ENCODE measurements at regions of chr19 and their contacts with region 1.

Region 1: DNA sequence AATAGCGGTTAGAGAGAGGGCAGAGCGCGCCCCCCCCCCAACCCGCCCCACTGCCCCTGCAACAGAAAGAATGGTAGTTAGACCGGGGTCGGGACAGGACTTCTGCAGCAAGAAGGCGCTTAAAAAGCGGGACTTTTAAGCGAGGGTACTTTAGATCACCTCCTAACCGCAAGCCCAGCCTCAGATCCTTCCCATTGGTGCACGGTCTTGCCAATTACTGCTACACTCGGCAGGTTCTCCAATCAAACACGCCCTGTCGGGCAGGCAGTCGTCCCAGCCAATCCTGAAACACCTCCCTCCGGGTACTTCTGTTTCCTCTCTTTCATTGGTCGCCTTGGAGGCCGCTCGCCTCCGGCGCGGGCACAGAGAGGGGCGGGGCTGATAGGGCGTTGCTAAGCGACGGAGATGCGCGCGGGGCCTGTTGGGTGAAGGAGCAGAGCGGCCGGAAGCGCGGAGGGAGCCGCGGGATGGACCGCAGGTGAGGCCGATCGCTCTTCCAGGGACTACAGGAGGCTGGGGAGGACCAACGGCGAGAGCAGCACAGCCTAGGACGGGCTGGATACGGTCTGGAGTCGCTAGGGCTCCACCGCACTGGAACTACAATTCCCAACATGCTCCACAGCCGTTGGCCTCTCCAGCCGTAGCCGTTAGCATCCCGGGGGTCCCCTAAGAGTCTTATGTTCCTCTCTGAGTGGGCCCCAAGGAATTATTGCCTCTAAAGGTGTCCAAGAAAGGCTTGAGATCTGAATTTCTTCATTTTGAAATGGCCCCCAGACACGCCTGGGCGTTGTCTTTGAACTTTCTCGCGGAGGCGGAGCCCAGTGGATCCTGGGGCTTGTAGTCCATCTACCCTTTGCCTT is at the start of gene PROSER3:
- DNase-seq: peak; percentile 98 to 99
- H3K4me3 ChIP-seq: peak within 1 kb of the TSS; percentile 53 to 85
- H3K27ac ChIP-seq: peak within 1 kb of the TSS; percentile 99
- H3K4me1 ChIP-seq: peaks cover 7 to 24% of the 10 kb centered on the region in 2 donors
- H3K27me3 ChIP-seq: no peaks in the 10 kb centered on the region
- CTCF ChIP-seq: no peak
- total RNA-seq, gene PROSER3: 6.5 TPM

Region 2: GRCh38 chr19:35628565-35629331 is 129.2 kb before region 1 on chr19 and contains the start of gene RBM42:
- intact Hi-C with region 1: loop called (anchors 5 kb)
- DNase-seq: peak; percentile 95 to 99
- H3K4me3 ChIP-seq: peak within 1 kb of the TSS; percentile 74 to 97
- H3K27ac ChIP-seq: peak within 1 kb of the TSS; percentile 73 to 91
- H3K4me1 ChIP-seq: peaks cover 5 to 10% of the 10 kb centered on the region in 2 donors
- H3K27me3 ChIP-seq: no peaks in the 10 kb centered on the region
- CTCF ChIP-seq: no peak
- total RNA-seq, gene RBM42: 69.0 TPM

Region 3: GRCh38 chr19:35702223-35703012 is 55.6 kb before region 1 on chr19:
- intact Hi-C with region 1: loop called (anchors 1 kb)
- DNase-seq: peak; percentile 94 to 98
- H3K4me3 ChIP-seq: peak overlapping the region; percentile 64 to 65
- H3K27ac ChIP-seq: no peak overlapping the region
- H3K4me1 ChIP-seq: peaks cover 2 to 3% of the 10 kb centered on the region in 2 donors
- H3K27me3 ChIP-seq: no peaks in the 10 kb centered on the region
- CTCF ChIP-seq: no peak

Region 4: DNA sequence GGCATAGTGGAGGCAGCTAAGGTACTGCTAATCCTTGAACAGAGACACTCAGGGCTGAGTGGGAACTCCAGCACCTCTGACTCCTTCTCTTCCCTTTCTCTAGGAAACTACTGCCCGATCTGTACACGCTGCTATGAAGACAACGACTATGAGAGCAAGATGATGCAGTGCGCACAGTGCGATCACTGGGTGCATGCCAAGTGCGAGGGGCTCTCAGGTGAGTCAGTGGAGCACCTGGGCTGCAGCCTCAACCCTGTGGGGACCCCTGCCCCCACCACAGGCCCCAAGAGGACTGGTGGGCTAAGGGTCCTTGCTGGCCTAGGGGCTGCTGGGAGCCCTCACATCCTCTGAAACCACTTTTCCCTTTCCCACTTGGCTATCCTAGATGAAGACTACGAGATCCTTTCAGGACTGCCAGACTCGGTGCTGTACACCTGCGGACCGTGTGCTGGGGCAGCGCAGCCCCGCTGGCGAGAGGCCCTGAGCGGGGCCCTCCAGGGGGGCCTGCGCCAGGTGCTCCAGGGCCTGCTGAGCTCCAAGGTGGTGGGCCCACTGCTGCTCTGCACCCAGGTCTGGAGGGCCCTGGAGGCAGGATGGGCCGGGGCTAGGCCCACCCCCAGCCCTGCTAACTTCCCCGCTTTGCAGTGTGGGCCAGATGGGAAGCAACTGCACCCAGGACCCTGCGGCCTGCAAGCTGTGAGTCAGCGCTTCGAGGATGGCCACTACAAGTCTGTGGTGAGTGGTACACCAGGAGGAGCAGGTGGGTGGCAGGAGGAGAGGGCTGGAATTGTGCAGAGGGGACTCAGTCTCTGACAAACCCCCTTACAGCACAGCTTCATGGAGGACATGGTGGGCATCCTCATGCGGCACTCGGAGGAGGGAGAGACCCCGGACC is 30.7 kb before region 1 on chr19:
- intact Hi-C with region 1: no loop called
- DNase-seq: no peak
- H3K4me3 ChIP-seq: no peak overlapping the region
- H3K27ac ChIP-seq: no peak overlapping the region
- H3K4me1 ChIP-seq: no peaks in the 10 kb centered on the region
- H3K27me3 ChIP-seq: no peaks in the 10 kb centered on the region
- CTCF ChIP-seq: no peak

Region 5: GRCh38 chr19:35740423-35741202 is 17.4 kb before region 1 on chr19:
- intact Hi-C with region 1: loop called (anchors 2 kb)
- DNase-seq: peak; percentile 94 to 99
- H3K4me3 ChIP-seq: peak overlapping the region; percentile 56 to 70
- H3K27ac ChIP-seq: peak overlapping the region; percentile 81 to 85
- H3K4me1 ChIP-seq: peaks cover 10 to 18% of the 10 kb centered on the region in 2 donors
- H3K27me3 ChIP-seq: no peaks in the 10 kb centered on the region
- CTCF ChIP-seq: peak; percentile 12 to 22 (median 18)

Region 6: GRCh38 chr19:35775298-35776110 is 17.5 kb after region 1 on chr19 and contains the start of gene ARHGAP33:
- intact Hi-C with region 1: loop called (anchors 1 kb)
- DNase-seq: peak; percentile 96 to 99
- H3K4me3 ChIP-seq: peak within 1 kb of the TSS; percentile 84 to 88
- H3K27ac ChIP-seq: peak within 1 kb of the TSS; percentile 59 to 61
- H3K4me1 ChIP-seq: peaks cover 5 to 14% of the 10 kb centered on the region in 2 donors
- H3K27me3 ChIP-seq: no peaks in the 10 kb centered on the region
- CTCF ChIP-seq: no peak
- total RNA-seq, gene ARHGAP33: 8.7 TPM

Region 7: DNA sequence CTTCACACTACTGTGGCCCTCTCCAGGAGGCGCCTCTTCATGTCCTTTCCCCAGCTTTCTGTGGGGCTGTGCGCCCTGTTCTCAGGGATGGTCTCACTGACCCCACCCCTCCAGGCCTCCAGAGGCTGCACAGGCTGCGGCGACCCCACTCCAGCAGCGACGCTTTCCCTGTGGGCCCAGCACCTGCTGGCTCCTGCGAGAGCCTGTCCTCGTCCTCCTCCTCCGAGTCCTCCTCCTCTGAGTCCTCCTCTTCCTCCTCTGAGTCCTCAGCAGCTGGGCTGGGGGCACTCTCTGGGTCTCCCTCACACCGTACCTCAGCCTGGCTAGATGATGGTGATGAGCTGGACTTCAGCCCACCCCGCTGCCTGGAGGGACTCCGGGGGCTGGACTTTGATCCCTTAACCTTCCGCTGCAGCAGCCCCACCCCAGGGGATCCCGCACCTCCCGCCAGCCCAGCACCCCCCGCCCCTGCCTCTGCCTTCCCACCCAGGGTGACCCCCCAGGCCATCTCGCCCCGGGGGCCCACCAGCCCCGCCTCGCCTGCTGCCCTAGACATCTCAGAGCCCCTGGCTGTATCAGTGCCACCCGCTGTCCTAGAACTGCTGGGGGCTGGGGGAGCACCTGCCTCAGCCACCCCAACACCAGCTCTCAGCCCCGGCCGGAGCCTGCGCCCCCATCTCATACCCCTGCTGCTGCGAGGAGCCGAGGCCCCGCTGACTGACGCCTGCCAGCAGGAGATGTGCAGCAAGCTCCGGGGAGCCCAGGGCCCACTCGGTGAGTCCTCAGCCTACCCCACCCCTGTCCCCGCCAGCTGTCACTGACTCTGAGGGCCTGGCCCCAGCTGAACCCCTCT is 28.5 kb after region 1 on chr19:
- intact Hi-C with region 1: no loop called
- DNase-seq: no peak
- H3K4me3 ChIP-seq: no peak overlapping the region
- H3K27ac ChIP-seq: no peak overlapping the region
- H3K4me1 ChIP-seq: no peaks in the 10 kb centered on the region
- H3K27me3 ChIP-seq: no peaks in the 10 kb centered on the region
- CTCF ChIP-seq: no peak

Region 8: GRCh38 chr19:35869327-35870123 is 111.5 kb after region 1 on chr19:
- intact Hi-C with region 1: loop called (anchors 5 kb)
- DNase-seq: peak; percentile 17 to 79
- H3K4me3 ChIP-seq: peak overlapping the region; percentile 60 to 71
- H3K27ac ChIP-seq: no peak overlapping the region
- H3K4me1 ChIP-seq: peaks cover 14 to 18% of the 10 kb centered on the region in 2 donors
- H3K27me3 ChIP-seq: no peaks in the 10 kb centered on the region
- CTCF ChIP-seq: no peak

Region 9: DNA sequence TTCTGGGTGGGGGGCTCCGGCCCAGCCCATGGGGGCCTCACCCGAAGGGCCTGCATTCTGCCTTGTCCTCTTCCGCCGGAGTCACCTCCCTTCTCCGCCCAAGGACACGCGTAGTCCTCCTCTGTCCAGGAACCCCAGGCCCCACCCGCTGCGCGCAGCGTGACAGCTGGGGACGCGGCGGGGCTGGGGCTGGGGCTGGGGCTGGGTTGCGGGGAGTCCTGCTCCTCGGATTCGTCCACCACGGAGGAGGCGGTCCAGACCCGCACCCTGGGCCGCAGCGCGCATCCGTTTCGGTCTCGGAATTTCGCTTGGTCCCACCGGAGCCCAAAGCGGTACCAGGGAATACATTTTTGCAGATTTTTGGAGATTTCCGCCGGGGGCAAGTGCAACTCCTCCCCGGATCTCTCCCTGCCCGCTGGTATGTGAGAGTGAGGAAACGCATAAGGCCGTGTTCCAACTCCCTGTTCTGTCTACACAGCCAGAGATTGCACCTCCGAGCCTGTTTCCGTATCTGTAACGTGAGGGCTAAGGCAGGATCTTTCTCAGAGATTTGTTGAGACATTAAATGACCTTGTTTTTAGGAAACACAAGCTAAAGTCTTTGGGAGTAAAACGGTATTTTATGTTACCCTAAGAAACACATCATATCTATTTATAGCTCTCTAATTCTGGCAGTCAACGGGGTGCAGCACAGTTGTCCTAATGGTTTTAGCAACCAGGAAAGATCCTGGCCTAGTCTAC is 394.5 kb after region 1 on chr19 and contains the start of gene COX7A1:
- intact Hi-C with region 1: loop called (anchors 5 kb)
- DNase-seq: peak; percentile 59 to 85
- H3K4me3 ChIP-seq: peak within 1 kb of the TSS; percentile 74 to 96
- H3K27ac ChIP-seq: peak within 1 kb of the TSS; percentile 99 to 100
- H3K4me1 ChIP-seq: peaks cover 4 to 17% of the 10 kb centered on the region in 2 donors
- H3K27me3 ChIP-seq: no peaks in the 10 kb centered on the region
- CTCF ChIP-seq: no peak
- total RNA-seq, gene COX7A1: 51.2 TPM